Posterior cingulate gyrus (tissue), 11 donors: ENCODE measurements at regions of chr15 and their contacts with region 1.

Region 1: GRCh38 chr15:50354838-50355618 is at the start of gene GABPB1:
- DNase-seq: peak; percentile 80 to 98 (median 85)

Region 2: DNA sequence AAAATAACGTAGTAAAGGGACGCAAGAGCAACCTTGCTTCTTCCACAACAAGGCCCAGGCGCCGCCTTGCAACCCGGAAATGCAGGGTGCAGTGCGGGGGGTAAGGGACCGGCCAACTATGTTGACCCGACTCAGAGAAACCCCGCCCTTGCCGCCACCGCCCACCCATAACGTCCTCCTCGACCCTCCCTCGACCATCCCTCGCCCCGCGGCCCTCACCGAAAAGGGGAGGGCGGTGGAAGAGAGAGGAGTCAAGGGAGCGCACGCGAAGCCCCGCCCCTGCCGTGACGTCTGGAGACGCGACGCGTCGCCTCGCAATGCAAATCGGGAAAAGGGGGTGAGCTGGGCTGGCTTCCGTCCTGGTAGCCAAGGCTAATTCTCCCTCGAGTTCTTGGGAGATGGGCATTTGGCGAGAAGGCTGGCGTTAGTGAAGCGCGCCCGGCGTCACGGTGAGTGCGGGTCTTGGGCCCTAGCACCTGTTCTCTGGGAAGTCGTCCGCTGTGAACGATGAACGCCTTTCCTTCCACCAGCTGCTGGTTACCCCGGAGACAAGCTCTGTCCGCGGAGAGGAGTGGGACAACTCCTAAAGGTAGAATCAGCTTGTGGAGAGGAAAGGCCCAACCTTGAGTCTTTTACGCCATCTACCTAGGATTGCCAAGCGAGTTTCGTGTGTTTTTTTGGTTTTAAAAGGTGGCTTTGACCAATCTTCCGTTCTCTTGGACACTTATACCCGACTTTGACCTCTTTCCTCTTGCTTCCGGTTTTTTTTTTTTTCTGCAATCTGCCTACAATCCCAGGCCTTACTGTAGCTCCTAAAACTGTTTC is 69.2 kb after region 1 on chr15 and contains the start of gene USP8:
- intact Hi-C with region 1: loop called (anchors 1 kb)
- DNase-seq: peak; percentile 89 to 99 (median 94)